Activated B cell treated with CpG ODN at 0.5 μM for 24 hours (primary cell): ENCODE measurements at regions of chr2 and their contacts with region 1.

Region 1: DNA sequence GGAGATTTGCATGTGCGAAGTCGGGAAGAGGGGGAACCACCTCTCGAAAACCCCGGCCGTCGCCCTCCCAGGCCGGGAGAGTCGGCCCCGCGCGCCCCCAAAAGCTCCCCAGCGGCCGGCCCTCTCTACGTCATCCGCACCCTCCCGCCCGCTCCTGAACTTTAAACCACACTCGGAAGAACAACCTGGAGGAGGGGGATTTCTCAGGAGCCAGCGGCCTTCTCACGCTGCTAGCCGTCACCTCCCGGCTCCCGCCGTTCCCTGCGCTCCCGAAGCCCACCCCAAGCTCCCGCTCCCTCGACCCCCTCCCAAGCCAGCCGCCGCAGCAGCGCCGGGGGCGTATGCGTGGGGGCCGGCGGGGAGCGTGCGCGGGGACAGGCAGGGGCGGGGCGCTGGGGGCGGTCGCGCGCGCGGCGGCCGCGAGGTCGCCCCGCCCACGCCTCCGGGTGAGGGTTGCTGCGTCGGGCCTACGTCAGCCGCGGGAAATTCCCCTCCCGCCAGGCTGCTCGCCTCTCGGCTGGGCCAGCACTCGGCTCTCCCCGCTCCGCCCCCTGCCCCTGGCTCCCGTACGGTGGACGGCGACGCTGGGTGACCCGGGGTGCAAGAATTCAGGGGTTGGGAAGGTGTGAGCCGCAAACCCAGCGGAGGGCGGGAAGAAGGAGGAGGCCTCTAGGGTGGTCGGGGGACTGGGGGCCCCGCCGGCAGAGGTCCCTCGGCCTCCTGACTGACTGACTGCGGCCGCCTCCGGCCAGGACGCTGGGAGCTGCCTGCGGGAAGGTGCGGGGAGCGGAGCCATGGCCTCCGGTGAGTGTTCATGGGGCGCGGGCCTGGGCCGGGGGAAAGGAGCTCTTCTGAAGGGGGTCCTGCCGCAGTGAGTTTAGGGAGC is at the start of gene REL:
- DNase-seq: peak; percentile 88
- ATAC-seq: peak; percentile 73
- H3K4me3 Mint-ChIP-seq: peak within 1 kb of the TSS; percentile 98
- H3K27ac Mint-ChIP-seq: peak within 1 kb of the TSS; percentile 95
- H3K4me1 Mint-ChIP-seq: peaks cover 36% of the 10 kb centered on the region
- H3K27me3 Mint-ChIP-seq: no peaks in the 10 kb centered on the region
- CTCF ChIP-seq: no peak
- total RNA-seq, gene REL: 211 and 238 TPM in 2 replicates

Region 2: GRCh38 chr2:60806988-60807681 is 74.2 kb before region 1 on chr2:
- CTCF ChIA-PET with region 1: interaction called, 34 read pairs
- POLR2A ChIA-PET with region 1: interaction called, 162 read pairs
- intact Hi-C with region 1: loop called (anchors 1 kb)
- DNase-seq: peak; percentile 34
- ATAC-seq: peak; percentile 93
- H3K4me3 Mint-ChIP-seq: peak overlapping the region; percentile 59
- H3K27ac Mint-ChIP-seq: peak overlapping the region; percentile 93
- H3K4me1 Mint-ChIP-seq: peaks cover 54% of the 10 kb centered on the region
- H3K27me3 Mint-ChIP-seq: no peaks in the 10 kb centered on the region
- CTCF ChIP-seq: no peak

Region 3: DNA sequence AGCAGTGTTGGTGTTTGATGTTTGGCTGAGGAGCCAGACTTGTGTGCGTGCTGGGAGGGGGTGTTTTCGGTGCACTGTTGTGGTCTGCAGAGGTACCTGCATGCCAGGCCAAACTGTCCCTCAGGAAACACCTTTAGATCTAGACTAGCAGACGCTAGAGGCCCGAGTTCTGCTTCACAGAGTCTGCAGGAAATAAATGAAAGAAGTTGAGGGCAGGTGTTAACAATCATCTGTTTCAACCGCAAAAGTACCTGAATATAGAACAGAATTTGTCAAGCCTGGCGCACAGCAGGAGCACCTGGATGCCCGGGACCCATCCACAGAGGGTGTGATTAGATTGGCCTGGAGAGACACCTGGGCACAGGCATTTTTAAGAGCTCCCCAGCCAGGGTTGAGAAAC is 40.4 kb before region 1 on chr2:
- CTCF ChIA-PET with region 1: interaction called, 54 read pairs
- POLR2A ChIA-PET with region 1: interaction called, 250 read pairs
- intact Hi-C with region 1: loop called (anchors 1 kb)
- DNase-seq: peak; percentile 35
- ATAC-seq: peak; percentile 63
- H3K4me3 Mint-ChIP-seq: peak overlapping the region; percentile 64
- H3K27ac Mint-ChIP-seq: peak overlapping the region; percentile 91
- H3K4me1 Mint-ChIP-seq: peaks cover 90% of the 10 kb centered on the region
- H3K27me3 Mint-ChIP-seq: no peaks in the 10 kb centered on the region
- CTCF ChIP-seq: no peak

Region 4: GRCh38 chr2:60966507-60967405 is 85.5 kb after region 1 on chr2:
- CTCF ChIA-PET with region 1: no interaction called
- POLR2A ChIA-PET with region 1: interaction called, 52 read pairs
- intact Hi-C with region 1: loop called (anchors 1 kb)
- DNase-seq: no peak
- ATAC-seq: peak; percentile 41
- H3K4me3 Mint-ChIP-seq: peak overlapping the region; percentile 83
- H3K27ac Mint-ChIP-seq: peak overlapping the region; percentile 87
- H3K4me1 Mint-ChIP-seq: peaks cover 84% of the 10 kb centered on the region
- H3K27me3 Mint-ChIP-seq: no peaks in the 10 kb centered on the region
- CTCF ChIP-seq: no peak

Region 5: GRCh38 chr2:60998628-60999545 is 117.6 kb after region 1 on chr2:
- CTCF ChIA-PET with region 1: interaction called, 7 read pairs
- POLR2A ChIA-PET with region 1: interaction called, 70 read pairs
- intact Hi-C with region 1: loop called (anchors 1 kb)
- DNase-seq: no peak
- ATAC-seq: peak; percentile 70
- H3K4me3 Mint-ChIP-seq: no peak overlapping the region
- H3K27ac Mint-ChIP-seq: peak overlapping the region; percentile 75
- H3K4me1 Mint-ChIP-seq: peaks cover 42% of the 10 kb centered on the region
- H3K27me3 Mint-ChIP-seq: no peaks in the 10 kb centered on the region
- CTCF ChIP-seq: no peak

Region 6: DNA sequence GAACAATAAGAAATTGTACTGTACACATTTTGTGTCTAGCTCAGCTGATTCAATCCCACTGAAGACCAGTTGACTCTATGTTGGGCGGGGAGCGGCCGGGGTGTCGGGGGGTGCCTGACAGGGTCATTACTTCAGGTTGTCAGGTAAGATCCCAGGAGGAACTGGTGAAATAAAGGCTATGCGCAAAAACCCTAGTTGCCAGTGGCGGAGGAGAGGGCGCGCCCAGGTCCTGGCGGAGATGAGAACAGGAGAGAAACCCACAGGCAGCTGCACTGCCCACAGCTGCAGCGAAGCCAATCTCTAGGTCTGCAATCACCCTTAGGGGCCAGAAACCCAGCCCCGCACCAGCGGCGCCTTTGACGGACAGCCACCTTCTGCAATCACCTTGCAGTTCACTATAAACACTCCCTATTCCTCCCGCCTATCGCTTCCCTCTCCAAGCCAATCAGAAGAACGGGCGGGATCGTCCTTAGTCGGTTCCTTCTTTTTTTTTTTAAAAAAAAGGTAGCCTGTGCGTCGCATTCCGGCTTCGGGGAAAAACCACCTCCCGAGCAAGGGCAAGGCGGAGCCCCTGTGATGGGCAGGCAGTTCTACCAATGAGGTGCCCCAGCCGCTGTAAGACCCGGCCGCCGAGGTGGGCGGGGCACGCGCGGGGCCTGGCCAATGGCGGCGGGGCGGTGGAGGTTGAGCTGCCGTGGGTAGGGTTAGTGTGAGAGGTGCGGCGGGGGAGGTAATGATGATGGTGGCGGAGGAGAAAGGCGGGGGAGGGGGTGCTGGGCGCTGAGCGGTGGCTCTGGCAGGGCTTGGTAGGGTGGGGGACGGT is 1823.9 kb after region 1 on chr2 and contains the start of gene EHBP1:
- CTCF ChIA-PET with region 1: no interaction called
- POLR2A ChIA-PET with region 1: no interaction called
- intact Hi-C with region 1: loop called (anchors 5 kb)
- DNase-seq: peak; percentile 98
- ATAC-seq: peak; percentile 93
- H3K4me3 Mint-ChIP-seq: peak within 1 kb of the TSS; percentile 95
- H3K27ac Mint-ChIP-seq: peak within 1 kb of the TSS; percentile 78
- H3K4me1 Mint-ChIP-seq: peaks cover 34% of the 10 kb centered on the region
- H3K27me3 Mint-ChIP-seq: no peaks in the 10 kb centered on the region
- CTCF ChIP-seq: no peak
- total RNA-seq, gene EHBP1: 24.0 and 25.0 TPM in 2 replicates